HEK293T (cell line): ENCODE measurements at regions of chr2 and their contacts with region 1.

Region 1: GRCh38 chr2:85327822-85328617 is at the start of gene TGOLN2:
- DNase-seq: peak; percentile 97

Region 2: DNA sequence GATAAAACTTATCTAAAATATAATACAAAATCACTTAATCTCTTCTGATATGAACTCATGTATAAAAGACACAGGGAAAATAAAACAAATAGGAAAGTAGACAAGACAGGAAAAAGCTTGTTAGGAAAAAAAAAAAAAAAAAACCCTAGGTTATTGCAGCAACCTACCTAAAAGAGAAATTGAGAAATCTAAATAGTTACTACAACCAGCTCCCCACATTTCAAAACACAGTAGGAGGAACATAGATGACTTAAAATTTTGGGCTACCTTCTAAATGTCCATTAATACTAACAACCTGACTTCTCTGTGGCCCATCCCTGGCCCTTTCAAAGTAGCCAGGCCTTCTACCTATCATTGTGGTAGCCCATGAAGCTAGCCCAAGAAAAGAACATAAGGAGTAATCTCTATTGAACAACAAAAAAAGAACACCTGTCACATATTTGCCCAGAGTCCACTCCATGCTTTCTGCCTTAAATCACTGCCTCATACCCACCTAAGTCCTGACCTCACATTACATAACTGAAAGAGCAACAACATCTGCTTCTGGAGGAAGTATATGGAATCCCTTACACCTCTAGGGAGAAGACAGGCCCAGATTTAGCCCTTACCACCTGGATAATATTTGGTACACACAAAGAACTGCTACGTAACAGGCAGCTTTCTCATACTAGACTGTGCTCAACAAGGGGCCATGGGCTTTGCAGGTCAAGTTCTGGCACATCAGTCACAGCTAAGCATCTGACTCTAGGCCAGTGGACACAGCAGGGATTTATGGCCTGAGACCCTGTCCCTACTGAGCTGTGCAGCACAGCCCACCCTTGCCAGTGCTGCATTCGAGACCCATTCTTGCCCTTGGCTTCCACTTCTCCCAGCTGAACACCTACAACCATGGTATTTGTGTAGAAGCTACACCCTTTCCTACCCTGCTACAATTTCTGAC is 877.5 kb before region 1 on chr2:
- CTCF ChIA-PET with region 1: no interaction called
- POLR2A ChIA-PET with region 1: no interaction called
- DNase-seq: no peak

Region 3: DNA sequence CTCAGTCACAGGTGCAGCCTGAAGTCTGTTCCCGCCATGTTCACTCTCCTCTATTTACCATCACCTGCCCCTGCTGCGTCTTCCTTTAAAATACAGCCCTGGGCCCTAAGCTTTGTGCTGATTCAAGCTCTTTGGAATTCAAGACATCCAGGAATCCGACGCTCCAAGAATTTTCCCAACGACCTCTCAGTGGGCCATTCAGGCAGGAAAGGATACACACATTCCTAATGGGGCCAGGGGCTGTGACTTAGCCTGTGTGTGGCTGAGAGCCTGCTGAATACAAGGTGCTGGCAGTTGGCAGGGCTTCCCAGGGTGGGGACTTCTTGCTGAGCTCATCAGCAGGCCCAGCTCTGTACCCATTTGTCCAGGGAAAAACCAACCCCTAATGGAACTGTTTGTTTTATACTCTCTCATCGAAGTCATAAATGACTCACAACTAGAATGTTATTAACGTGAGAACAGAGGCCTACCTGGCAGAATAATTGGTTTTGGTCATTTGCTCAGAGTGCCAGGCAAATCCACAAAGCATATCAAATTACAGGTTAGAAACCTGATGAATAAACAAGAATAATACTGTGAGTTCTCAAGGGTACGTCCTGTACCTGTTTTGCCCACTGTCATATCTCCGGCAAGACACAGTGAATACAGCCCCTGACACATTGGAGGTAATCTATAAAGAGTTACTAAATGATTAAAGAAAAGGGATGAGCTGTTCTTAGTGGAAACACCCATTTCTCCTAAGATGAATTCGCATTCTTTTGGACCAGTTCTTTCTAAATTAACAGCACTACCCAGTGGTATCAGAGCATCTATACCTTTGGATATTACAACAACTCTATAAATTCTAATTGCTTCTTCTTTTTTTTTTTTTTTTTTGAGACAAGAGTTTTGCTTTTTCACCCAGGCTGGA is 369.6 kb before region 1 on chr2:
- CTCF ChIA-PET with region 1: no interaction called
- POLR2A ChIA-PET with region 1: no interaction called
- DNase-seq: peak; percentile 37

Region 4: DNA sequence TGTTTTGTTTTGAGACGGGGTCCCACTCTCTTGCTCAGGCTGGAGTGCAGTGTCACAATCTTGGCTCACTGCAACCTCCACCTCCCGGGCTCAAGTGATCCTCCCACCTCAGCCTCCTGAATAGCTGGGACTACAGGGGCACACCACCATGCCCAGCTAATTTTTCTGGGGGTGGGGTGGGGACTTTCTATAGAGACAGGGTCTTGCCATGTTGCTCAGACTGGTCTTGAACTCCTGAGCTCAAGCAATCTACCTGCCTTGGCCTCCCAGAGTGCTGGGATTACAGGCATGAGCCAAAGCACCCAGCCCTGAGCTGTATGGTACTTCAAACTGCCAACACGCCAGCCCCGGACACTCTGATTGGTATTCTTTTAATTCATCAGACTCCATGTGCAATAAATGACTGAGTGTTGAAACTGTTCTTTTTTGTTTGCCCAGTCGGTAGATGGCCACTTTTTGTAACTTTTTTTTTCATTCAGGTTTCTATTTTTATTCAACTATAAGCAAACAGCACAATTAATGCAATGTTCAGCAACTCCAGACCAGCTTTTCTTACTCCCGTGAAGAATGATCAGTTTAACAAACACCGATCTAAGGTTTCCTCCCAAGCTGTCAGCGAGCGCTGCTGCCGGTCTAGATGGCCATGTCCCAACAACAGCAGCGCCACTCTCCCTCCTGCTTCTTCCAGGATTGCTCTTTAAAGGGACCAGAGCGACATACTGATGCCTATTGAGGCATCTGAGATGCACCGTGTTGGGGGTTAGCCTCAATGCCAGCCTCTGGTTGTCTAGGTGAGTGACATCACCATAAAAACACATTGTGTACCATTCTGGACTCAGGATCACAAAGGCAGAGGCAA is 12.2 kb after region 1 on chr2:
- CTCF ChIA-PET with region 1: interaction called, 7 read pairs
- POLR2A ChIA-PET with region 1: interaction called, 17 read pairs
- DNase-seq: no peak

Region 5: DNA sequence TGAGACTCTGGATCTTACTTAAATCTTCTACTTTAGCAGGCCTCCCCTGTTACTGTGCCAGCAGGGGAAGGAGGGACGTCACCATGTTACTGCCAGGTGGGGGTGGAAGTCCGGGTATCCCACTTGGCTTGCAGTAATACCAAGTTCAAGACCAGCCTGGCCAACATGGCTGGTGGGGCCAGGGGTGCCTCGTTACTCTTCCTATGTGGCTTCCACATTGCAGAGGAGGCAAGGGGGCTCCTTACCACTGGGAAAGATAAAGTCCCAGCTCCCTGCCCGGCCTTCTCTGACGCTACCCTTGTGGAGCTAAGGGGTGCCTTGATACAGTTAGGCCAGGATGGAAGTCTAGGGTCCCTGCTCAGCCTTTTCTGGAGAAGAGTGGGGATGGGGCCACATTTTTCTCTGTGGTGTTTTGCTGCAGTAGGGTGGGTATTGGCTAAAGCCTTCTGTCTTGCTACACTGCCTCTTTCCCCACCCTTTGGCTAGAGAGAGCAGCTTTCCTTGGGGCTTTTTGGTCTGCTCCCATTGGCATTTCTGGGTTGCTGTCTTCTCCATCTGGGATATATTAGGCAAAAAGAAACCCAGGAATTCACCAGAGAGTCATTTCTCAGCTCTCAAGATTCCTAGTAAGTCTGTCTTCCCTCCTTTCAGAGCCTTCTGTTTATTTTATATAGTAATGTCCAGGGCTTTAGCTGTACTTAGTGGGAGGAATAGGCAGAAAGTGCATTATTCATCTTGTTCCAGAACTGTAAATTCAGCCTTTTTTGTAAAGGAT is 48.5 kb after region 1 on chr2:
- CTCF ChIA-PET with region 1: no interaction called
- POLR2A ChIA-PET with region 1: no interaction called
- DNase-seq: no peak